HEK293 (cell line): ENCODE measurements at regions of chr1 and their contacts with region 1.

Region 1: DNA sequence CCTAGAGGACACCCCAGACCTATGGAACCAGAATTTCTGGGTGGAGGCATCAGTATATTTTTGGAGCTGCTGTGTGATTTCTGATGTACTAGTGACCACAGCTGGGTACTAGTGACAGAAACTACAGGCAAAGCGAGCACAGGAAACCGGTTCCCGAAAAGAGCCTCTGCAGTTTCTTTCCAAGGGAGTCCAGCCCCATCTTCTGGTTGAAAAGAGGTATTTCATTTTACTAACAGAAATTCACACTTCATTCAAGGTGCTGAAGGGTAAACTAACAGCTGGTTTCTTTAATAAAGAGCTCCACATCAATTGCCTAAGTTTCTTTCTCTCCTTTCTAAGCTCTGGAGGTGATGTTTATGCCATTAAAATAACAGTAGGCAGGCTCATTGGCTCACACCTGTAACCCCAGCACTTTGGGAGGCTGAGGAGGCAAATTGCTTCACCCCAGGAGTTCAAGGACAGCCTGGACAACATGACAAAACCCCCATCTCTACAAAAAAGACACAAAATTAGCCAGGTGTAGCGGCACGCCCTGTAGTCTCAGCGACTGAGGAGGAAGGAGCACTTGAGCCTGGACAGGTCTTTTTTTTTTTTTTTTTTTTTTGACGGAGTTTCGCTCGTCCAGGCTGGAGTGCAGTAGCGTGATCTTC is 22.0 kb downstream of the THAP3 start:
- H3K4me3 ChIP-seq: no peak overlapping the region
- H3K27ac ChIP-seq: no peak overlapping the region
- H3K4me1 ChIP-seq: no peaks in the 10 kb centered on the region
- CTCF ChIP-seq: peak; percentile 41; the same call in 1 of the 2 replicates

Region 2: DNA sequence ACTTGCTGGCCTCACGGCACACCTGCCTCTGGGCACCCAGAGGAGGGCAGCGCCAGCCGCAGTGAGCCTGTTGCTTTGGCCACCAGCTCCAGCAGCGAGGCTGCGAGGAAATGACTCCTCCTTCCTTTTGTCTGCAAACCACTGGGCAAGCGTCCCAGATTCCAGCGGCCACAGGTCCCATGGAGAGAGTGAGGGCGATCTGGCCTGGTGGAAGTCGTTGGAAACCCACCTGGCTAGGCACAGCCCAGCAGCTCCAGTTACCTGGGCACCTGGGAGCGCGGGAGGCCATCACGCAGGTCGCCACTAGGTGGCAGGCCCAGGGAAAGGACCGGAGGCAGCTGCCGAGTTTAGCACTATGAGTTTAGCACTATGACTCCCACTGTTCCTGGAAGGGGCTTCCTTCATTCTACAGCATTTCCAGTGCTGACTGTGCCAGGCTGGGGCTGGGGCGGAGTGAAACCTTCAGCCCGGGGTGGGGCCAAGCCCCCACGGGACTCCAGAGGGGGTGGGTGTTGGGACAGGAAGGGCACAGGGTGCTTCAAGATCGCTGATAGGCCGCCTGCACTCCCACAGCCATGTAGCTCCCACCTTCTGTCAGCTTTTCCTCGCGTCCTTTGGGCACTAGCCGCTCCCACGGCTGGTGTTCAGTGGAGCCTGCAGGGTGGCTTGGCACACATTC is 223.2 kb before region 1 on chr1:
- CTCF ChIA-PET with region 1: interaction called, 10 read pairs
- POLR2A ChIA-PET with region 1: no interaction called
- H3K4me3 ChIP-seq: no peak overlapping the region
- H3K27ac ChIP-seq: no peak overlapping the region
- H3K4me1 ChIP-seq: no peaks in the 10 kb centered on the region; the same call in 1 of the 2 replicates
- CTCF ChIP-seq: peak; percentile 89

Region 3: GRCh38 chr1:6483036-6483760 is 163.4 kb before region 1 on chr1:
- CTCF ChIA-PET with region 1: interaction called, 13 read pairs
- POLR2A ChIA-PET with region 1: no interaction called
- H3K4me3 ChIP-seq: no peak overlapping the region
- H3K27ac ChIP-seq: no peak overlapping the region
- H3K4me1 ChIP-seq: no peaks in the 10 kb centered on the region
- CTCF ChIP-seq: no peak

Region 4: DNA sequence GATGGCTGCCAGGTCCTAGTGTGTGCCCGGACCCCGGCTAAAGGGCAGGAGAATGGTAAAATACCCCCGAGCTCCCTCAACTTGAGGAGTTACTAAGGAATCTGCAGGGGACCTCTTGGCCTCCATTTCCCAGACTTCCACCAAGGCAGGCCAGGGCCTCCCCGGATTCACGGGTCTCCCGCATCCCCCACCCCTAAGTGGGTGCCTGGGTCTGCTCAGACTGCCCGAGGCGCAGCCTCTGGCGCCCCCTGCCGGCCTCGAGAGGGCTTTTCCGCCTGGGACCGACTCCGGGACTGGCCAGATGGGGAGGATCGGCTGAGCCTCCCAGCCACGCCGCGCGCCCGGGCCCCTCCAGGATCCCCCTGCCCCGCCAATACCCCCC is 156.8 kb before region 1 on chr1:
- CTCF ChIA-PET with region 1: interaction called, 13 read pairs
- POLR2A ChIA-PET with region 1: no interaction called
- H3K4me3 ChIP-seq: peak overlapping the region; percentile 72
- H3K27ac ChIP-seq: peak overlapping the region; percentile 67; the same call in 1 of the 2 replicates
- H3K4me1 ChIP-seq: no peaks in the 10 kb centered on the region
- CTCF ChIP-seq: peak; percentile 89

Region 5: GRCh38 chr1:6634371-6635052 is 12.1 kb before region 1 on chr1:
- CTCF ChIA-PET with region 1: interaction called, 14 read pairs
- POLR2A ChIA-PET with region 1: no interaction called
- H3K4me3 ChIP-seq: no peak overlapping the region
- H3K27ac ChIP-seq: no peak overlapping the region
- H3K4me1 ChIP-seq: no peaks in the 10 kb centered on the region
- CTCF ChIP-seq: peak; percentile 89

Region 6: GRCh38 chr1:6743189-6744101 is 96.8 kb after region 1 on chr1:
- CTCF ChIA-PET with region 1: no interaction called
- POLR2A ChIA-PET with region 1: no interaction called
- H3K4me3 ChIP-seq: no peak overlapping the region
- H3K27ac ChIP-seq: no peak overlapping the region
- H3K4me1 ChIP-seq: no peaks in the 10 kb centered on the region
- CTCF ChIP-seq: no peak

Region 7: DNA sequence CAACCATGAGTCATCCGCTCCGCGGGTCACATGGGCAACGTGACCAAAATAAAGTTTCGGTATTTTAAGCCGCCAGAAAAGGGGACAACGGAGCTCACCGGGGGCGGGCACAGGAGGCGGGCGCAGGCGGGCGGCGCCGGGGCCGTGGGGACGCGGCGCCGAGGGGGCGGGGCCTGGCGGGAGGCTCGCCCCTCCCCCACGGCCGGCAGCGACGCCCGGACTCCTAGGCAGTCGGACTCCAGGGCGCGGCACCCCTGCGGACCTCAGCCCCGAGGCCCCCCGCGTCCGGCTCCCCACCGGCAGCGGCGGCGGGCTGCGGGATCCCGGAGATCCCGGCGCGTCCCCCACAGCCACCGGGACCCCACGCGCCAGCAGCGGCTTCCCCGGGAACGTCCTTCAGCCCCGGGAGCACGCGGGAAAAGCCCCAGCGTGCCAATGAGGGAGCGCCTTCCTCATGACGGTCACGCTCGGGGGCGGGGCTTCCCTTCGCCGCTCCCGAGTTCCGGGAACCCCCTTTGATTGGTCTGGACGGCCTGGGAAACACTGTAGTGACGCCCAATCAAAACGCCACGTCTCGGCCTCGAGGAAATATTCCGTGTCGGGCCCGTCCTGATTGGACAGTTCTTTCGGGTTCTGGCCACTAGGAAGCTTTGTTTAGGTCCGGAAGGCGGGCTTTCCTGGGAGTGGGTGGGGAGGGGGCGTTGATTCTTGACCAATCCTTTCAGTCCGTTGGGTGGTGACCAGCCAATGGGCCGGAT is 138.1 kb after region 1 on chr1:
- CTCF ChIA-PET with region 1: no interaction called
- POLR2A ChIA-PET with region 1: no interaction called
- H3K4me3 ChIP-seq: peak overlapping the region; percentile 77
- H3K27ac ChIP-seq: peak overlapping the region; percentile 92
- H3K4me1 ChIP-seq: no peaks in the 10 kb centered on the region
- CTCF ChIP-seq: no peak